ENCODE measurements at regions of chr3 and their contacts with region 1.

Region 1: GRCh38 chr3:117603097-117603496 is 893.5 kb downstream of the TUSC7 start:
- DNase-seq: no peak
- H3K4me3 ChIP-seq: no peak overlapping the region
- H3K27ac ChIP-seq: no peak overlapping the region
- H3K4me1 ChIP-seq: no peaks in the 10 kb centered on the region
- H3K27me3 ChIP-seq: no peaks in the 10 kb centered on the region
- CTCF ChIP-seq: no peak
- EP300 ChIP-seq: no peak
- POLR2A ChIP-seq: no peak

Region 2: DNA sequence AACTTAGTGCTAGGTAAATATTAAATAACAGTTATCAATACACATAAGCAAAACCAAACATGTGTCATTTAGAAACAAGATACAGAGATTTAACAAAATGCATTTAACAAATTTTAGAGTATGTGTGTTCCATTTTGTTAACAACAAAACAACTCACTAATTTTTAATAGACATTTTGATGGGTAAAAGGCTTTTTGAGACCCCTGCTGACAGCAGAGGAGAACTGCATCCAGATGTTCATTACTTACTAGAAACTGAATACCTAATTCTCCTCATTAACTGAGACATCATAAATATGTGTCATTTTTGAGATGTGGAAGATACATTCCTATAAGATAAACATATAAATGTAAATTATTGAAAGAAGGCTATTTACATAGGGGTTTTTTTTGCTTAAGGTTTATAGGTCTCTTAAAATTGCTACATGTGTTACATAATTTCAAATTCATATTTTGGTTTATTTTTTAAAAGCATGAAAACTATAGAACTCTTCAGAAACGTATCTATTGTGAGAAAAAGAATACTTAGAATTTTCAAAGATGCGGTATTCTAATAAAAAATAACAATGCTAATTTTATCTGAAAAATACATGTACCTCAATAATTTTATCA is 116.3 kb after region 1 on chr3:
- in situ Hi-C with region 1: loop called in 1 of 4 experiments (anchors 25 kb)
- intact Hi-C with region 1: no loop called
- DNase-seq: no peak
- H3K4me3 ChIP-seq: no peak overlapping the region
- H3K27ac ChIP-seq: no peak overlapping the region
- H3K4me1 ChIP-seq: no peaks in the 10 kb centered on the region
- H3K27me3 ChIP-seq: no peaks in the 10 kb centered on the region
- CTCF ChIP-seq: peak; percentile 44 to 63 (median 55)
- EP300 ChIP-seq: no peak
- POLR2A ChIP-seq: no peak